Cardiac septum (tissue), 1 donor: ENCODE measurements at regions of chr20 and their contacts with region 1.

Region 1: GRCh38 chr20:4064144-4064909 is 49.0 kb upstream of the RNF24 start:
- DNase-seq: peak; percentile 94

Region 2: GRCh38 chr20:3710703-3711483 is 353.4 kb before region 1 on chr20:
- intact Hi-C with region 1: loop called (anchors 10 kb)
- DNase-seq: peak; percentile 86

Region 3: GRCh38 chr20:3932681-3933080 is 131.6 kb before region 1 on chr20:
- intact Hi-C with region 1: loop called (anchors 5 kb)
- DNase-seq: no peak

Region 4: GRCh38 chr20:4038047-4038459 is 26.3 kb before region 1 on chr20:
- intact Hi-C with region 1: no loop called
- DNase-seq: peak; percentile 92